Activated CD8-positive, alpha-beta T cell treated with anti-CD3 and anti-CD28 coated beads, Interleukin-2, amount 10 ng/mL, durations not matched to agents 7 days and 5 days (primary cell): ENCODE measurements at regions of chr17 and their contacts with region 1.

Region 1: GRCh38 chr17:8243827-8244226 is 4.0 kb downstream of the CTC1 start:
- DNase-seq: peak; percentile 54
- ATAC-seq: no peak
- H3K4me3 Mint-ChIP-seq: no peak overlapping the region
- H3K27ac Mint-ChIP-seq: peak overlapping the region; percentile 60
- H3K4me1 Mint-ChIP-seq: peaks cover 40% of the 10 kb centered on the region
- H3K27me3 Mint-ChIP-seq: no peaks in the 10 kb centered on the region

Region 2: GRCh38 chr17:8300627-8301242 is 56.9 kb after region 1 on chr17:
- CTCF ChIA-PET with region 1: interaction called, 22 read pairs
- POLR2A ChIA-PET with region 1: interaction called, 50 read pairs
- DNase-seq: peak; percentile 74
- ATAC-seq: peak; percentile 93
- H3K4me3 Mint-ChIP-seq: no peak overlapping the region
- H3K27ac Mint-ChIP-seq: peak overlapping the region; percentile 37
- H3K4me1 Mint-ChIP-seq: peaks cover 18% of the 10 kb centered on the region
- H3K27me3 Mint-ChIP-seq: no peaks in the 10 kb centered on the region